Activated B cell treated with CpG ODN at 0.5 μM for 24 hours (primary cell): ENCODE measurements at regions of chr20 and their contacts with region 1.

Region 1: DNA sequence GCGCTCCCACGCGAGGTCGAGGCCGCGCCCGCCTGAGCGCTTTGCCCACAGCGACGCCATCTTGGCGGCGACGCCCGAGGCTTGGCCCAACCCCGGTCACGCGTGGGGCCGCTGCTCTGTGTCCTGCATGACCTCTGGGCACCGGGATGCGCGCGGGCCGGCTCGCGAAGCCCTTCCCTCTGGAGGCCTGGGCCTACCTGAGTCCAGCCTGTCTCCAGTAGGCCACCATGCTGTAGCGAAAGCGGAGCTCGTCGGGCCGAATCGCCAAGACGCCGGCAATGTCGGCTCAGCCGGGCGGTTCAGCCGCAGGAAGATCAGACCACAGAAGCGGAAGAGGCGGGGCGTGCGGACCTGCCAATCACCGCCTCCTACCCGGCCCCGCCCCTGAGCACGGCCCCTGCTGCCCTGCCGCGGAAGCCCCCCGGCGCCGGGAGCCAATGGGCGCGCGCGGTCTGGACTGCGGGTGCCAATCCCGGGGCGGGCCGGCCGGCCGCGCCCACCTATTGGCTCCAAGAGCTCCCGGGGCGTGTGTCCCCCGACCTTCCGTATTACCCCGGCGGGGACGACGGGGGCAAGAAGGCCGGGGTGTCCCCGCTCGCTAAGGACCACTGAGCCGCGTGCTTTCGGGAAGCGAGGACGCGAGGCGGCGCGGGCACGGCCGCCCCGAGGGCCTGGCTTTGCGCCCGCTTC is at the start of gene ATP5F1E:
- DNase-seq: peak; percentile 98
- ATAC-seq: peak; percentile 96
- H3K4me3 Mint-ChIP-seq: peak within 1 kb of the TSS; percentile 96
- H3K27ac Mint-ChIP-seq: peak within 1 kb of the TSS; percentile 95
- H3K4me1 Mint-ChIP-seq: peaks cover 50% of the 10 kb centered on the region
- H3K27me3 Mint-ChIP-seq: no peaks in the 10 kb centered on the region
- CTCF ChIP-seq: no peak
- total RNA-seq, gene ATP5F1E: 84.0 and 86.1 TPM in 2 replicates

Region 2: GRCh38 chr20:58659841-58660240 is 372.3 kb before region 1 on chr20:
- CTCF ChIA-PET with region 1: no interaction called
- POLR2A ChIA-PET with region 1: no interaction called
- intact Hi-C with region 1: no loop called
- DNase-seq: no peak
- ATAC-seq: no peak
- H3K4me3 Mint-ChIP-seq: no peak overlapping the region
- H3K27ac Mint-ChIP-seq: no peak overlapping the region
- H3K4me1 Mint-ChIP-seq: peaks cover 25% of the 10 kb centered on the region
- H3K27me3 Mint-ChIP-seq: no peaks in the 10 kb centered on the region
- CTCF ChIP-seq: no peak

Region 3: DNA sequence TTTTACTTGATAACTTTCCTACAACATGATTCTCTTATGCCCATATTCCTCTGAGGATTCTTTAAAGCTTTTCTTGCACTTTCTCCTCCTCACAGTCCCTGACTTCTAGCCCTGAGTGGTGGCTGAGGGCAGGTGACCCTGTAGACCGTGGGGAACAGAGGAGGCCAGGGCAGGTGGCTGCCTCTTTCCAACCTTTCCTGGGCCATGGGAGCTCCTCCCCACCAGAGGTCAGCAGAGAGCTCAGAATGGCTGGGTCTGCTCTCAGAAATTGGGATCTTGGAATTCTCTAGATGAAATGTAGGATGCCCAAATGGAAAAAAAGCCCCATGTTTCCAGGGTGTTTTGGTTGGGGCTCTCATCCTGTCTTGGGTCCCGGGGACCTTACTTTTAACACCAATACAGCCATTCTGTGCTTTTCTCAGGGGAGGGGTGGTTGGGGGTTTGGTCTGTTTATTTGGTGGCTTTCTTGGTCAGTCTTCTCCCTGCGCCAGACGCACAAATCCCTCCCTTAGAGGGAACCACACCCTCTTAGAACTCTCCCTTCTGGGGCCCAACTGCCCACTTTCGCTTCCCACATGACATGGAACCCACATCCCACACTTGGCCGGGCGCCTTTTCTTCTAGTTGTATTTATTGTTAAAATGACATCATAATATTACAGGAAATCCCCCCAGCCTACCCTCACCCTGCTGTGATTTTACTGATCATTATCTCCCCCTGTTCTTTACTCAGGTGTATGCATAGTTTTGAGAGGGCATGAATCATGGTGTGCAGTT is 161.7 kb before region 1 on chr20:
- CTCF ChIA-PET with region 1: interaction called, 10 read pairs
- POLR2A ChIA-PET with region 1: interaction called, 5 read pairs
- intact Hi-C with region 1: loop called (anchors 1 kb)
- DNase-seq: peak; percentile 37
- ATAC-seq: peak; percentile 84
- H3K4me3 Mint-ChIP-seq: no peak overlapping the region
- H3K27ac Mint-ChIP-seq: peak overlapping the region; percentile 41
- H3K4me1 Mint-ChIP-seq: peaks cover 11% of the 10 kb centered on the region
- H3K27me3 Mint-ChIP-seq: no peaks in the 10 kb centered on the region
- CTCF ChIP-seq: peak; percentile 83

Region 4: GRCh38 chr20:58907399-58908137 is 124.6 kb before region 1 on chr20:
- CTCF ChIA-PET with region 1: no interaction called
- POLR2A ChIA-PET with region 1: interaction called, 47 read pairs
- intact Hi-C with region 1: loop called (anchors 1 kb)
- DNase-seq: peak; percentile 50
- ATAC-seq: peak; percentile 83
- H3K4me3 Mint-ChIP-seq: peak overlapping the region; percentile 82
- H3K27ac Mint-ChIP-seq: peak overlapping the region; percentile 97
- H3K4me1 Mint-ChIP-seq: peaks cover 61% of the 10 kb centered on the region
- H3K27me3 Mint-ChIP-seq: no peaks in the 10 kb centered on the region
- CTCF ChIP-seq: no peak

Region 5: GRCh38 chr20:58993332-58994201 is 38.6 kb before region 1 on chr20:
- CTCF ChIA-PET with region 1: no interaction called
- POLR2A ChIA-PET with region 1: interaction called, 41 read pairs
- intact Hi-C with region 1: no loop called
- DNase-seq: no peak
- ATAC-seq: no peak
- H3K4me3 Mint-ChIP-seq: no peak overlapping the region
- H3K27ac Mint-ChIP-seq: peak overlapping the region; percentile 63
- H3K4me1 Mint-ChIP-seq: peaks cover 44% of the 10 kb centered on the region
- H3K27me3 Mint-ChIP-seq: no peaks in the 10 kb centered on the region
- CTCF ChIP-seq: no peak

Region 6: GRCh38 chr20:59013959-59014608 is 18.1 kb before region 1 on chr20:
- CTCF ChIA-PET with region 1: interaction called, 5 read pairs
- POLR2A ChIA-PET with region 1: interaction called, 89 read pairs
- intact Hi-C with region 1: no loop called
- DNase-seq: no peak
- ATAC-seq: no peak
- H3K4me3 Mint-ChIP-seq: no peak overlapping the region
- H3K27ac Mint-ChIP-seq: no peak overlapping the region
- H3K4me1 Mint-ChIP-seq: peaks cover 47% of the 10 kb centered on the region
- H3K27me3 Mint-ChIP-seq: no peaks in the 10 kb centered on the region
- CTCF ChIP-seq: no peak

Region 7: DNA sequence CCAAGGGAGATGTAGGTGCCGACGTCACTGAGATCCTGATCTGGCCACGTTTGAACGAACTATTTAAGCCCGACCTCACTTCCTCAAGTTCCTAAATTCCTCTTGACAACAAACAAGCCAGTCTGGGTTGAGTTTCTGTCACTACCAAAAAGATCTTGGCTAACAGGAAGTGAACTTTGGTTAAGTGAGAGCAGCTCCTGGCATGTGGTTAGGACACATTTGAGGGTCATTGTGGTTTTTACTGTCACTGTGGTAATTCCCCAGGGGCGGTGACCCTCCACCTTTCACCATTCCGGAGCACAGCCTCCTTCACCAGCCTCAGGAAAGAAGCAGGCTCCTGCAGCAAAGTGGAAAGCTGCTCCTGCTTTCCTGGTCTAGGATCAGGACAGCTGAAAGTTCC is 88.3 kb after region 1 on chr20:
- CTCF ChIA-PET with region 1: interaction called, 4 read pairs
- POLR2A ChIA-PET with region 1: interaction called, 12 read pairs
- intact Hi-C with region 1: no loop called
- DNase-seq: no peak
- ATAC-seq: no peak
- H3K4me3 Mint-ChIP-seq: peak overlapping the region; percentile 54
- H3K27ac Mint-ChIP-seq: peak overlapping the region; percentile 99
- H3K4me1 Mint-ChIP-seq: peaks cover 68% of the 10 kb centered on the region
- H3K27me3 Mint-ChIP-seq: no peaks in the 10 kb centered on the region
- CTCF ChIP-seq: no peak

Region 8: DNA sequence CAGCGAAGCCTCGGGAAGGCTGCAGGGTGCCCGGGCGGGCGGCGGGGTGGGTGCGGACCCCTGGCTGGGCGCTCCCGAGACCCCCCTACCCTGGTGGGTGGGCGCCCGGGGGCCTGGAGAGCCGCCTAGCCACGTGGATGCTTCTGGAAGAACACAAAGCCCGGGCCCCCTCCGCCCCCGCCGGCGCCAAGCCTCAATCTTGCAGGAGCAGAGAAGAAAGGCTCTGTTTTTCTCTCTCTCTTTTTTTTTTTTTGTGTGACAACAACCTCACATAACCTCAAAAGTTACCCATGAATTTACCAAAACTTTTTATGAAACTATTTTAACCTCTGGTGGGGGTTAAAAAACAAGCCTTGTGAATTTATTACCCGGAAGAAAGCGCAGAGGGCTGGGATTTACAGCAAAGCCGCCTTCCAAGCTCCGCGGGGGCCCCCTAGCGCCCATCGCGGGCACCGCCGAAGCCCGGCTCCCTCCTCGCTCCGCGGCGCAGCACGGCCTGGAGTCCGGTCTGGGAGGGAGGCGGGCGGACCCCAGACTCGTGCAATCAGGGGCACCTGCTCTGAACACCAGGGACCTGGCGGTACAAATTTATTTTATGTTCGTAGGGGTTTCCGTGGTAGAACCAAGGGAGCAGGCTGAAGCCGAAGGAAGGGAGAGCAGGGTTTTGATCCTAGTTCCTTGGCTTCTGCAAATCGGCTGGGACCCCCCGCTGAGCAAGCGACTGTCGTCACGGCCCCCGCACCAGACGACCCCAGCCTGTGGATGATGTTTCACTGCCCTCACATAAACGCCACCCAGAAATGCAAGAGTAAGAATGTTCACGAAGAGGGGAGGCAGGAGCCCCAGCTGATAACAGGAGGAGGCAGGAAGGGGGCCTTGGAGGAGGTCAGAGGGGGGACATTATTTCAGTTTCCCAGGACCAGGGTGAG is 190.3 kb after region 1 on chr20:
- CTCF ChIA-PET with region 1: interaction called, 4 read pairs
- POLR2A ChIA-PET with region 1: interaction called, 11 read pairs
- intact Hi-C with region 1: no loop called
- DNase-seq: peak; percentile 84
- ATAC-seq: peak; percentile 97
- H3K4me3 Mint-ChIP-seq: peak overlapping the region; percentile 84
- H3K27ac Mint-ChIP-seq: no peak overlapping the region
- H3K4me1 Mint-ChIP-seq: peaks cover 11% of the 10 kb centered on the region
- H3K27me3 Mint-ChIP-seq: peaks cover 9% of the 10 kb centered on the region
- CTCF ChIP-seq: peak; percentile 83